ENCODE measurements at regions of chr1 and their contacts with region 1.

Region 1: GRCh38 chr1:202938287-202938925 is 11.4 kb upstream of the KLHL12 start:
- DNase-seq: no peak
- ATAC-seq: no peak
- H3K4me3 ChIP-seq: no peak overlapping the region
- H3K27ac ChIP-seq: no peak overlapping the region
- H3K4me1 ChIP-seq: no peaks in the 10 kb centered on the region
- H3K27me3 ChIP-seq: no peaks in the 10 kb centered on the region
- CTCF ChIP-seq: no peak

Region 2: DNA sequence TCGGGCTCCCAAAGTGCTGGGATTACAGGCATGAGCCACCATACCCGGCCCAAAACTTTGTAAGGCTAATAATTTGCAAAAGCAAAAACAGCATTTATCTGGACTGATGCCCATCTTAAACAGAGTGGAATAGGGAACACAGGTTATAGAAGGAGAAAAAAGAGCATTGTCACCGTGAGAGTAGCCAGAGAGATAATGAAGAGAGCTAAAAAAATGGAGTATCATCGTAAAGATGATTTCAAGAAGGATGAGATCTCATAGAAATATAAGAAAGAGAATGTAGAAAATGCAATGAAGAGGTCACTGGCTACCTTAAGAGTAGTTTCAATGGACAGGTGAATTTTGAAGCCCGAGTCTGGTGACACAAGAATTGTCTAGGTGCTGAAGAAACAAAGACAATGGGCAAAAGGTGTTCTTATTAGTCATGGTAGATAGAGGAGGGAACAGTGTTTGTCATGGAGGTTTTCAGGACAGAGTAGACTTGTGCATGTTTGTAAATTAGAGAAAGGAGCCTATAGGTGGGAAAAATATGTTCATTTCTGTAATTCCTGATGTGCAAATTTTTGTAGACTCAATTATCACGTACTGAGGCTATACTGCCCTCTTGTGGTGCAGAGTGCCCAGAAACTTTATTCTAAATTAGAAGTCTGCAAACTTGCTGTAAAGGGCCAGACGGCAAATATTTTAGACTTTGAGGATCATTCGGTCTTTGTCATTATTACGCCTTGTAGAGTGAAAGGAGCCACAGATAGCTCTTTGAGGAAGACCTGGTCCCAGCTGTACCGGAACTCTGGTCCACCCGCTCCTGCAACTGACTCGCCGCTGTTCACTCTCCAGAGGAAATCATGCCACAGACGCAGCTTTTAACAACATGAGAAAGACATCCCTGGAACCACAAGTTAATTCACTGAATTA is 60.7 kb after region 1 on chr1:
- intact Hi-C with region 1: loop called in 1 of 2 experiments (anchors 10 kb)
- DNase-seq: peak in 2 of 4 donors; percentile 39 to 50
- ATAC-seq: peak; percentile 86
- H3K4me3 ChIP-seq: no peak overlapping the region
- H3K27ac ChIP-seq: no peak overlapping the region
- H3K4me1 ChIP-seq: no peaks in the 10 kb centered on the region
- H3K27me3 ChIP-seq: peaks cover 0 to 19% of the 10 kb centered on the region in 2 donors
- CTCF ChIP-seq: peak; percentile 70 to 71